ENCODE measurements at regions of chr4 and their contacts with region 1.

Region 1: GRCh38 chr4:37389967-37390580 is 145.5 kb downstream of the NWD2 start:
- ATAC-seq: peak in 4 of 8 experiments; percentile 41 to 91 (median 56)
- H3K4me3 ChIP-seq: no peak overlapping the region
- H3K27ac ChIP-seq: no peak overlapping the region
- H3K4me1 ChIP-seq: no peaks in the 10 kb centered on the region

Region 2: DNA sequence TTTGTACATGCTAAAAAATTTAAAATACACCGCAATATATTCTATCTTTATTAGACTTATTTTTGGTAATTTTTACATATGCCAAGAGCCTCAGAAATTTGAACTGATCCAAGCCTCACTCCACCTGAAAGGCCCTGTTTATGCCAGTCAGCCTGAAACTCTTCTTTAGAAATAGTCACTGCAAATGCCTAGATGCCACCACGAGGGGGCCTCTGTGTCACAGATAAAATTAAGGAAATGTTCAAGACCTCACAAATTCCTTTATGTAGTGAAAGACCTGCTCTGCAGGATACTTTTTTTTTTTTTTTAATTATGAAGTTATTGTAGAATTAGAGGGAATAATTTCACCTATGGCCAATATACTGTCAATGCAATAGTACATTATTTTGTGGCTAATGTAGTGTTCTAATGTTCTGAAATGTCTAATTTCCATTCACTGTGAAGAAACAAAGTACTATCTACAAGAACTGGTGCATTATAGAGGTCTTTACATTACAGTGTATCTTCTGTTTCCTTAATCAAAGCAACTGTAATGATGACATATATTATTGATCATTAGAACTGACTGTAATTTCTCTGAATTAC is 1038.9 kb before region 1 on chr4:
- in situ Hi-C with region 1: loop called in 4 of 9 experiments (anchors 25 kb)
- ATAC-seq: peak in 7 of 8 experiments; percentile 25 to 73 (median 55)
- H3K4me3 ChIP-seq: no peak overlapping the region
- H3K27ac ChIP-seq: no peak overlapping the region
- H3K4me1 ChIP-seq: peaks cover 6 to 10% of the 10 kb centered on the region in 2 donors

Region 3: DNA sequence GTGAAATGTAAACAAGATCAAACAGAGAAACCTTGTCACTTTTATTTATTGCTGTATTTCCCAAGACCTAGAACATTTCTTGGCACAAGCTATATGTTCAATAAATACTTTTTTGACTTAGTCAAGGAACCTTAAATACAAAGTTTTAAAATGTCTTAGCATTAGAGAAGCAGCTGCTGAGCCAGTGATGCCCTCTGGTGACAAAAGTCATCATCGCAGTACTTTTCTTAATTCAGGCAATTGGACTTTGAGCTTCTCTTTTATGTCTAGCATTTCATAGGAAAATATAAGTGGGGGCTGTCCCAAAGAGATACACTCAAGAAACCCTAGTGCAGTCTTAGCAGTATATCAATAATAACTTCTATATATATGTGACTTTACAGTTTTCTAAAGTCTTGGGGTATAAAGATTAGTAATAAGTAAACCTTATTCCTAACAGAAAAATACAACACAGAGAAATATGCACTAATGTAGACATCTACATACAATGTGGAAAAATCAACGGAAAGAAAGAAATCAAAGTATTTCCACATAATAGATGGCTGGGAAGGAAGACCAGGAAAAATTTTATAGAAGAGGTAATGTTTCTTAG is 990.2 kb before region 1 on chr4:
- in situ Hi-C with region 1: loop called in 1 of 9 experiments (anchors 25 kb)
- ATAC-seq: peak in 2 of 8 experiments; percentile 23 to 49
- H3K4me3 ChIP-seq: no peak overlapping the region
- H3K27ac ChIP-seq: no peak overlapping the region
- H3K4me1 ChIP-seq: peaks cover 0 to 4% of the 10 kb centered on the region in 2 donors

Region 4: DNA sequence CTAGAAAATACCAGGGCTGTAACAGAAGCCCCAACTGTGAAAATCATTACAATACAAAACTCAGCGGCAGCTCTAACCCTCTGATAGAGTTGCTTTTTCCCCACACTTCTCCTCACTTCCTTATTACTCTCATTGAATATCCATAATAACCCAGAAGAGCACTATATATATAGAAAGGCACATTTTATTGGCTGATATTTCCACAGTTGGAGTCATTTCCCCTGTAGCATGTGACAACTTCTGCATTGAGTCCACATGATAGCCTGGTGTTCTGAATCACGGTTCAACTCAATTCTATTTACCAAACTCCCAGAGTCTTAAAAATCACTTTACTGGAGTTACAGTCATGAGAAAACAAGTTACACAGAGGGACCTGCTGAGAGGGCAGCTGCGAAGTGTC is 192.2 kb before region 1 on chr4:
- in situ Hi-C with region 1: no loop called
- ATAC-seq: no peak
- H3K4me3 ChIP-seq: no peak overlapping the region
- H3K27ac ChIP-seq: no peak overlapping the region
- H3K4me1 ChIP-seq: peaks cover 0 to 9% of the 10 kb centered on the region in 2 donors

Measured in motor neuron (in vitro differentiated cells).